Naive thymus-derived CD4-positive, alpha-beta T cell (primary cell): ENCODE measurements at regions of chr3 and their contacts with region 1.

Region 1: GRCh38 chr3:129120254-129121004 is 1.2 kb downstream of the RAB43 start:
- DNase-seq: peak; percentile 63 to 96 (median 93)
- ATAC-seq: peak; percentile 72
- H3K4me3 ChIP-seq: peak overlapping the region; percentile 95
- H3K4me3 Mint-ChIP-seq: peak overlapping the region; percentile 86 to 99 (median 98)
- H3K27ac ChIP-seq: peak overlapping the region; percentile 83
- H3K27ac Mint-ChIP-seq: peak overlapping the region; percentile 91 to 100 (median 97)
- H3K4me1 ChIP-seq: peaks cover 32 to 33% of the 10 kb centered on the region in 2 donors
- H3K4me1 Mint-ChIP-seq: peaks cover 26 to 58% (median 42%) of the 10 kb centered on the region in 7 donors
- H3K27me3 ChIP-seq: no peaks in the 10 kb centered on the region
- H3K27me3 Mint-ChIP-seq: no peaks in the 10 kb centered on the region

Region 2: DNA sequence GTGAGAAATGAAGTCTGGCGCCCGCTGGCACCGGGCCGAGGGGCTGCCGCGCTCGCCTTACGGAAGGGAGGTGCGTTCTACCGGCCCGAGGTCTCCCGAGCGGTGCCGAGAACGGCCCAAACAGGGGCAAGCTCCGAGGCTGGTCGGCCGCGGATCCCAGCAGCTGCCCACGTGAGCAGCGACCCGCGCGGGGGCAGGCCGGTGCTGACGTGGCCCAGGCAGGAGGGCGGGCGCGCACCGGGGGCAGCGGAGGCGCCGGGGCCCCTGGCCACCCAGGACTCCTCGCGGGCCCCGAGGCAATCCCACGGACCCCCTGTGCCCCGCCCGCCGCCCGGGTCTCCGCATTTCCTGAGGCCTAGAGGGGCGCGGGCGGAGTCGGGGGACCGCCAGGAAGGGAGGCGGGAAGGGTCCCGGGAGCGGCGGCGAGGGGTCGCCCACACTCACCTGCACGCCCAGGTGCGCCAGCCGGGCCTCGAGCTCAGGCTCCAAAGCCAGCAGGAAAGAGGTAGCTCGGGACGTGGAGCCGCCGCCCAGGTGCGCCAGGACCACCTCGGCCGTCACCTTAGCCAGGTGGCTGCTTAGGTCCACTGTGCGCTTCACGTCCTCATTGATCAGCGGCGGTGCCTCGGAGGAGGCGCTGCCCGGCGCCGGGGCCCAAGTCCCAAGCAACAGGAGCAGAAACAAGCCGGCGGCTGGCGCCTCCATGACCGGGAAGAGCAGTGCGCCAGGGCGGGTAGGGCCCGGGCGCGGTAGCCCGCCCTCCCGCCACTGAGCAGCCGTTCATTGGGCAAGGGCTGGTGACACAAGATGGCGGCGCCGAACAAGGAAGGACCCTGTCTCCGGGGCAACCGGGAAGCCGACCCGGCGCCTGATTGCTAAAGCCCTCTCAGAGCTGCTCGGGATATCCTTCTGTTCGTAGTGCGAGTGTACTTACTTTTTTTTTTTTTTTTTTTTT is 470.1 kb before region 1 on chr3 and contains the start of gene RPN1:
- CTCF ChIA-PET with region 1: no interaction called
- POLR2A ChIA-PET with region 1: interaction called, 4 read pairs
- intact Hi-C with region 1: loop called in 1 of 2 experiments (anchors 5 kb)
- DNase-seq: peak; percentile 81 to 98 (median 97)
- ATAC-seq: peak; percentile 98
- H3K4me3 ChIP-seq: peak within 1 kb of the TSS; percentile 94
- H3K4me3 Mint-ChIP-seq: peak within 1 kb of the TSS; percentile 83 to 92 (median 90)
- H3K27ac ChIP-seq: peak within 1 kb of the TSS; percentile 99
- H3K27ac Mint-ChIP-seq: peak within 1 kb of the TSS; percentile 73 to 94 (median 92)
- H3K4me1 ChIP-seq: peaks cover 12 to 17% of the 10 kb centered on the region in 2 donors
- H3K4me1 Mint-ChIP-seq: peaks cover 25 to 43% (median 37%) of the 10 kb centered on the region in 7 donors
- H3K27me3 ChIP-seq: no peaks in the 10 kb centered on the region
- H3K27me3 Mint-ChIP-seq: no peaks in the 10 kb centered on the region
- total RNA-seq, gene RPN1: 76.7 to 203 (median 88.5) TPM

Region 3: GRCh38 chr3:128879125-128879969 is 241.1 kb before region 1 on chr3 and contains the start of gene ACAD9:
- CTCF ChIA-PET with region 1: no interaction called
- POLR2A ChIA-PET with region 1: interaction called, 4 read pairs
- intact Hi-C with region 1: loop called (anchors 1 to 2 kb)
- DNase-seq: peak; percentile 94 to 100 (median 96)
- ATAC-seq: peak; percentile 95
- H3K4me3 ChIP-seq: peak within 1 kb of the TSS; percentile 74
- H3K4me3 Mint-ChIP-seq: peak within 1 kb of the TSS; percentile 80 to 98 (median 89)
- H3K27ac ChIP-seq: peak within 1 kb of the TSS; percentile 97
- H3K27ac Mint-ChIP-seq: peak within 1 kb of the TSS; percentile 92 to 98 (median 97)
- H3K4me1 ChIP-seq: peaks cover 19 to 43% of the 10 kb centered on the region in 2 donors
- H3K4me1 Mint-ChIP-seq: peaks cover 40 to 83% (median 77%) of the 10 kb centered on the region in 7 donors
- H3K27me3 ChIP-seq: no peaks in the 10 kb centered on the region
- H3K27me3 Mint-ChIP-seq: peaks cover 0 to 6% (median 0%) of the 10 kb centered on the region in 5 donors
- total RNA-seq, gene ACAD9: 40.3 to 74.0 (median 63.0) TPM

Region 4: DNA sequence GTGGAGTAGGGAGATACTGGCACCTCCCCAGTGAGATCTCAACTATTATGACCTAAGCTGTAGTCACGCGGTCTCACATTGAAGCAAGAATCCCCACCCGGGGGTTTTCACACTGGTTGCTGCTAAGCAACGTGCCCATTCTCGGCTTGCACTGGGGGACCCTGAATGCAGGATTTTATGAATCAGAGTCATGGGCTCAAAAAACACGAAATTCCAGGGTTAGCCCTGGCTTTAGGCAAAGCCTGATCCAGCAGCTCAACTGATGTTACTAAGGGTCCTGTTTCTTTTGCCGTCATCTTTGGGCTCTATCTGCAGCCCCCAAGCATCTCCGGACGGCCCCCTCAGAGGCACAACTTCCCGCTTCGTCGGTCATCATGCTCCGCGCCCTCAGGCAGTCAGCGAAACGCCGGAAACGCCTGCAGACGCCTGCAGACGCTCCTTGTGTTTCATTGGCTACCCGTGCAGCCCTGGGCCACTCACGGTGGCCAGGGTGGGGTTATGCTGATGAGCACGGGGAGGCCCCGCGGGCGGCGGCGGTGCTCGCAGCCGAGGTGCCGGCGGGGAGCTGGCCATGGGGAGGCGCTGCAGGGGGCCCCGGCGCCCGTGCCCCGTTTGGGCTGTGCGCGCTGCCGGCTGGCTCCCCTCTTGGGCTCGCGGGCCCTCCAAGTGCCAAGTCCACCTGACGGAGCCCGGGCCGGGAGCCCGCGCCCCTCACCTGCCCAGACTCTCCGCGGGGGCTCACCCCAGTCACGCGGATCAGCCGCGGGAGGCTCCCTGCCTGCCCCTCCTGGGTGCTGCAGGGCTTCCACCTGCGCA is 93.5 kb before region 1 on chr3:
- CTCF ChIA-PET with region 1: interaction called, 3 read pairs
- POLR2A ChIA-PET with region 1: interaction called, 15 read pairs
- intact Hi-C with region 1: loop called (anchors 1 kb)
- DNase-seq: peak; percentile 84 to 94 (median 93)
- ATAC-seq: peak; percentile 99
- H3K4me3 ChIP-seq: peak overlapping the region; percentile 67
- H3K4me3 Mint-ChIP-seq: peak overlapping the region; percentile 69 to 88 (median 86)
- H3K27ac ChIP-seq: peak overlapping the region; percentile 74
- H3K27ac Mint-ChIP-seq: peak overlapping the region; percentile 82 to 97 (median 93)
- H3K4me1 ChIP-seq: peaks cover 8 to 11% of the 10 kb centered on the region in 2 donors
- H3K4me1 Mint-ChIP-seq: peaks cover 13 to 31% (median 25%) of the 10 kb centered on the region in 7 donors
- H3K27me3 ChIP-seq: no peaks in the 10 kb centered on the region
- H3K27me3 Mint-ChIP-seq: peaks cover 0 to 3% (median 0%) of the 10 kb centered on the region in 5 donors

Region 5: GRCh38 chr3:129100274-129100673 is 20.2 kb before region 1 on chr3:
- CTCF ChIA-PET with region 1: interaction called, 6 read pairs
- POLR2A ChIA-PET with region 1: interaction called, 78 read pairs
- intact Hi-C with region 1: loop called (anchors 1 to 2 kb)
- DNase-seq: no peak
- ATAC-seq: no peak
- H3K4me3 ChIP-seq: no peak overlapping the region
- H3K4me3 Mint-ChIP-seq: peak overlapping the region in 6 of 10 donors; percentile 2 to 77 (median 41)
- H3K27ac ChIP-seq: peak overlapping the region; percentile 11
- H3K27ac Mint-ChIP-seq: peak overlapping the region in 8 of 9 donors; percentile 21 to 95 (median 76)
- H3K4me1 ChIP-seq: peaks cover 3 to 61% of the 10 kb centered on the region in 2 donors
- H3K4me1 Mint-ChIP-seq: peaks cover 56 to 92% (median 78%) of the 10 kb centered on the region in 7 donors
- H3K27me3 ChIP-seq: no peaks in the 10 kb centered on the region
- H3K27me3 Mint-ChIP-seq: no peaks in the 10 kb centered on the region

Region 6: GRCh38 chr3:129183569-129184395 is 63.4 kb after region 1 on chr3 and contains the start of gene CNBP:
- CTCF ChIA-PET with region 1: interaction called, 6 read pairs
- POLR2A ChIA-PET with region 1: interaction called, 106 read pairs
- intact Hi-C with region 1: loop called (anchors 1 kb)
- DNase-seq: peak; percentile 90 to 96 (median 94)
- ATAC-seq: peak; percentile 100
- H3K4me3 ChIP-seq: peak within 1 kb of the TSS; percentile 74
- H3K4me3 Mint-ChIP-seq: peak within 1 kb of the TSS; percentile 93 to 99 (median 96)
- H3K27ac ChIP-seq: peak within 1 kb of the TSS; percentile 100
- H3K27ac Mint-ChIP-seq: peak within 1 kb of the TSS; percentile 91 to 99 (median 97)
- H3K4me1 ChIP-seq: peaks cover 18 to 27% of the 10 kb centered on the region in 2 donors
- H3K4me1 Mint-ChIP-seq: peaks cover 32 to 48% (median 42%) of the 10 kb centered on the region in 7 donors
- H3K27me3 ChIP-seq: no peaks in the 10 kb centered on the region
- H3K27me3 Mint-ChIP-seq: no peaks in the 10 kb centered on the region
- total RNA-seq, gene CNBP: 259 to 366 (median 327) TPM

Region 7: GRCh38 chr3:129399145-129399894 is 278.9 kb after region 1 on chr3:
- CTCF ChIA-PET with region 1: no interaction called
- POLR2A ChIA-PET with region 1: no interaction called
- intact Hi-C with region 1: loop called in 1 of 2 experiments (anchors 5 kb)
- DNase-seq: peak; percentile 34 to 89 (median 81)
- ATAC-seq: peak; percentile 91
- H3K4me3 ChIP-seq: peak overlapping the region; percentile 70
- H3K4me3 Mint-ChIP-seq: peak overlapping the region; percentile 89 to 100 (median 97)
- H3K27ac ChIP-seq: peak overlapping the region; percentile 88
- H3K27ac Mint-ChIP-seq: peak overlapping the region; percentile 94 to 100 (median 98)
- H3K4me1 ChIP-seq: peaks cover 10 to 13% of the 10 kb centered on the region in 2 donors
- H3K4me1 Mint-ChIP-seq: peaks cover 23 to 47% (median 37%) of the 10 kb centered on the region in 7 donors
- H3K27me3 ChIP-seq: no peaks in the 10 kb centered on the region
- H3K27me3 Mint-ChIP-seq: no peaks in the 10 kb centered on the region